GM10248 (cell line): ENCODE measurements at regions of chr22 and their contacts with region 1.

Region 1: DNA sequence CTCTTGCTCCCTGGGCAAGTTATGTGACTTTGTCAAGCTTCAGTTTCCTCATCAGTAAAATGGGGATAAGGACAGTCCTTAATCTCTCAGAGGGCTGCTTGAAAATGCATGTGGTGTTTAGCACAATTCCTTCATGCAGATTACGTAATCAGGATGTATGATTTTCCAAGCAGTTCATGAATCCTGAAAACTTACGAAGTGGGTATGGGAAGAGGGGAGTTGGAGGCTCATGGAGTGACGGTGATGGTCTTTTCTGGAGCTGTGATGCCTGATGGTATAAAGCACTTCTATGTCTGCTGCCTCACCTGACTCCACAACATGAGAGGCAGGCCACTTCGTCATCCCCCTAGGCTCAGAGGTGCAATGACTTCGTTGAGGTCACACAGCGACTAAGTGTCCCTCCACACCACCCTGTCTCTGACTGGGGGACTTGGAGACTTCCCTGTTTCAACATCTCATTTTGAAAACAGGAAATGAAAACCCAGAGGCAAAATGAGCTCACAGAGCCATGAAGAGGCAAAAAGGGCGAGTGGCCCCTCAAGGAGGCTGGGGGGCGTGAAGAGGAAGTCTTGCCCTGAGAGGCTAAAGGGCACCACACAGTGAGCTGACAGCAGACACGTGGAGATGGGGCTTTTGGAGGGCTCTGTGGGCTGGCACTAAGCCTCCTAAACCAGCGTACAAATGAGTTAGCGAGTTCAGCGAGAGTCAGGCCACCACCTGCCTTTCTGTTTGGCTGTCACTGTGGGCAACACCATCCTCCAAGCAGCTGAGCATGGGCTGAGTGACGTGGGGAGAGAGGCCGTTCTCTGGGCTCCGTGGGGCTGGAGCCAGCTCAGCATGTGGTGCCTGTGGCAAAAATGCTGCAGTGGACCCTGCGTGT is 10.1 kb downstream of the MCM5 start:
- DNase-seq: peak; percentile 86
- CTCF ChIP-seq: no peak

Region 2: DNA sequence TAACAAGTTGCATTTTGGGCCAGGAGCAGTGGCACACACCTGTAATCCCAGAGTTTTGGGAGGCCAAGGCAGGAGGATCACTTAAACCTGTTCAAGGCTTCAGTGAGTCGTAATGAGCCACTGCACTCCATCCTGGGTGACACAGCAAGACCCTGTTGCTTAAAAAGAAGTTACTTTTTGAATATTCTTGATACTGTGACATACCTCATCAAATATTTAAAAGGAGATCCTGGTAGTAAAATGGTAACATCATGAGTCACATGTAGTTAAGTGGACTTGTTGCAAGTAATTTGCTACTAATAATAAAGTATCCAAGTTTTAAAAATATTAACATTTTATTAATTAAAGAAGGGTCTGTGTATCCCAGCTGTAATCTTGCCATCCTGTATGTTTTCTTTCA is 134.4 kb before region 1 on chr22:
- CTCF ChIA-PET with region 1: no interaction called
- POLR2A ChIA-PET with region 1: no interaction called
- DNase-seq: no peak
- CTCF ChIP-seq: no peak

Region 3: DNA sequence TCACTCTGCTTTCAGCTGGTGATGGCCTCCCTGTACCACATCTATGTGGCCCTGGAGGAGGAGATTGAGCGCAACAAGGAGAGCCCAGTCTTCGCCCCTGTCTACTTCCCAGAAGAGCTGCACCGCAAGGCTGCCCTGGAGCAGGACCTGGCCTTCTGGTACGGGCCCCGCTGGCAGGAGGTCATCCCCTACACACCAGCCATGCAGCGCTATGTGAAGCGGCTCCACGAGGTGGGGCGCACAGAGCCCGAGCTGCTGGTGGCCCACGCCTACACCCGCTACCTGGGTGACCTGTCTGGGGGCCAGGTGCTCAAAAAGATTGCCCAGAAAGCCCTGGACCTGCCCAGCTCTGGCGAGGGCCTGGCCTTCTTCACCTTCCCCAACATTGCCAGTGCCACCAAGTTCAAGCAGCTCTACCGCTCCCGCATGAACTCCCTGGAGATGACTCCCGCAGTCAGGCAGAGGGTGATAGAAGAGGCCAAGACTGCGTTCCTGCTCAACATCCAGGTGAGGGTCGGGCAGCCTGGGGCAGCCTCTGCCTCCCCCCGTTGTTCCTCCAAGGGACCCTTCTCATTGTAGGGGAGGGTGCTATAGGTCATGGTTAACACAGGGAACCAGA is 23.2 kb before region 1 on chr22:
- CTCF ChIA-PET with region 1: interaction called, 11 read pairs
- POLR2A ChIA-PET with region 1: interaction called, 7 read pairs
- DNase-seq: no peak
- CTCF ChIP-seq: no peak

Region 4: GRCh38 chr22:35392357-35392756 is 17.7 kb before region 1 on chr22:
- CTCF ChIA-PET with region 1: interaction called, 11 read pairs
- POLR2A ChIA-PET with region 1: interaction called, 4 read pairs
- DNase-seq: no peak
- CTCF ChIP-seq: no peak

Region 5: DNA sequence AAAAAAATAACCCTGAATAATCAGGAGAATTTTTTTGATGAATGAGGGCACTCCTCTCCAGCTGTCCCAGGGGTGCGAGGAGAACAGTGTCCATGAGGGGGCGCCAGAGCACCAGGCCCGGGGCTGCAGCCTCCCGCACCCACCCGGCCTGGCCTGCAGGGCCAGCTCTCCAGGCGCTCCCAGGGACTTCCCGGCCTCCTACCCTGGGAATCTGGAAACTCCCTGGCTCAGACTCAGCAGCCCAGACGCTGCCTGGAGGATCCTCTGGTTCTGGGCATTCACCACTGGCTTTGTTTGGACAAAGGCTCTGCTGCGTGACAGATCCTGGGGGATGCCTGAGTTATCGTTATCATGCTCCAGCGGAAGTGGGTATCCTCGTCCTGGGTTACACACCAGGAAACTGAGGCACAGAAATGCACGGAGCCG is 20.9 kb after region 1 on chr22:
- CTCF ChIA-PET with region 1: interaction called, 16 read pairs
- POLR2A ChIA-PET with region 1: no interaction called
- DNase-seq: peak; percentile 73
- CTCF ChIP-seq: peak; percentile 44

Region 6: GRCh38 chr22:35510481-35510934 is 100.5 kb after region 1 on chr22:
- CTCF ChIA-PET with region 1: no interaction called
- POLR2A ChIA-PET with region 1: no interaction called
- DNase-seq: no peak
- CTCF ChIP-seq: no peak

Region 7: DNA sequence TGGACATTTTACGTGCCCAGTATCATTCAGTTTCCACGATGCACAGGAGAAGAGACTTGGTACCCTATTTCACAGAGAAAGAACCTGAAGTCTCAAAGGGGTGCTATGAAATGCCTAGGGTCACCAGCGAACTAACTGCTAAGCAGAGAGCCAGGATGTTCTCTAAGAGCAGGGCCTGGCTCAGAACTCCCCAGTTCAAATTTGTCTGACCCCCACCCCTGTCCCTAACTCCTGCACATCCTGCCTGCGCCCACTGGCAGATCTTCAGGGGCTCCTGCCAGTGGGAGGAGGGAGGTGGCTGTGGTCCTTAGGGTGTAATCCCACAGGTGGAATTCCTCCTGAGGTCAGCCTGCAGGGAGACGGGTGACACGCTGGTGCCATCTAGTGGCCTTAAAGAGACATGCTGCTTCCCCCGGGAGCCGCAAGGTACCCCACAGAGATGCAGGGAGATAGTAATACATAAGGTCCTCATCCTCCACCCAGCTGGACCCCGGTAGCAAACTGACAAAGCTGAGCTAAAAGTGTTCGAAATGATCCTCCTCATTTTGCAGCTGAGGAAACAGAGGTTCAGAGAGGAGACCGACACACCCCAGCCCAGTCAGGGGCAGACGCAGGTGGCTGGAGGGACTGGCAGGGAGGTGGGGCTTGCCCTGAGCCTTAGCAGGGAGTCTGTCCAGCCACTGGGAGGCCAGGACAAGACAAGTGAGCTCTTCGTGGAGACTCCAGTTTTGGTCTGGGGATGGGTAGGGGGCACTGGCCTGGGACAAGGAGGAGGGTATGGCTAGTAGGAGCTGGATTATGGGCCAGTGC is 173.0 kb after region 1 on chr22:
- CTCF ChIA-PET with region 1: interaction called, 10 read pairs
- POLR2A ChIA-PET with region 1: no interaction called
- DNase-seq: peak; percentile 88
- CTCF ChIP-seq: peak; percentile 89